OCI-LY7 (cell line): ENCODE measurements at regions of chr3 and their contacts with region 1.

Region 1: GRCh38 chr3:170117134-170117533 is 64.4 kb downstream of the PHC3 start:
- DNase-seq: peak; percentile 10
- H3K4me3 ChIP-seq: no peak overlapping the region
- H3K27ac ChIP-seq: no peak overlapping the region
- H3K4me1 ChIP-seq: peaks cover 9% of the 10 kb centered on the region
- CTCF ChIP-seq: peak; percentile 45

Region 2: DNA sequence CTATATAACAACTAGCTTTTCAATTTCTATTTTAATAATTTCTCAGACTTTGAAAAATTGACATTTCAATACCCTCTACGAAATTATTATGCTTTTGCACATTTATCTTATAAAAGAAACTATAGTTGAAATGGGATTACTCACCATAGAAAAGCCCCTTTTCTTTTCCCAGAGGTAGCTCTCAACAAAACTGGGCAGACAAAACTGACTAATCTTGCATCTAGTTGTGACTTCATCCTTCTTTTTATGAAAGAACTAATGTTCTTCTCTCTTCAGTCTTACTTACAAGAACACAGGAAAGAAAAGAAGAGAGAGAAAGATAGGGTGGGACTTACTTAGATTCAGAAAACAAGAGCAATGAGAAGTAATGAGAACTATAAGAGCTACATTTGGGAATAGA is 18.4 kb before region 1 on chr3:
- CTCF ChIA-PET with region 1: interaction called, 3 read pairs
- POLR2A ChIA-PET with region 1: interaction called, 11 read pairs
- intact Hi-C with region 1: loop called (anchors 2 kb)
- DNase-seq: no peak
- H3K4me3 ChIP-seq: no peak overlapping the region
- H3K27ac ChIP-seq: no peak overlapping the region
- H3K4me1 ChIP-seq: no peaks in the 10 kb centered on the region
- CTCF ChIP-seq: no peak